Activated CD8-positive, alpha-beta T cell treated with anti-CD3 and anti-CD28 coated beads for 36 hours (primary cell): ENCODE measurements at regions of chr2 and their contacts with region 1.

Region 1: GRCh38 chr2:26184555-26185303 is 11.8 kb downstream of the GAREM2 start:
- DNase-seq: peak; percentile 85
- ATAC-seq: peak; percentile 97
- H3K4me3 Mint-ChIP-seq: peak overlapping the region; percentile 74
- H3K27ac Mint-ChIP-seq: peak overlapping the region; percentile 52
- H3K4me1 Mint-ChIP-seq: peaks cover 9% of the 10 kb centered on the region
- H3K27me3 Mint-ChIP-seq: peaks cover 11% of the 10 kb centered on the region
- CTCF ChIP-seq: peak; percentile 59

Region 2: DNA sequence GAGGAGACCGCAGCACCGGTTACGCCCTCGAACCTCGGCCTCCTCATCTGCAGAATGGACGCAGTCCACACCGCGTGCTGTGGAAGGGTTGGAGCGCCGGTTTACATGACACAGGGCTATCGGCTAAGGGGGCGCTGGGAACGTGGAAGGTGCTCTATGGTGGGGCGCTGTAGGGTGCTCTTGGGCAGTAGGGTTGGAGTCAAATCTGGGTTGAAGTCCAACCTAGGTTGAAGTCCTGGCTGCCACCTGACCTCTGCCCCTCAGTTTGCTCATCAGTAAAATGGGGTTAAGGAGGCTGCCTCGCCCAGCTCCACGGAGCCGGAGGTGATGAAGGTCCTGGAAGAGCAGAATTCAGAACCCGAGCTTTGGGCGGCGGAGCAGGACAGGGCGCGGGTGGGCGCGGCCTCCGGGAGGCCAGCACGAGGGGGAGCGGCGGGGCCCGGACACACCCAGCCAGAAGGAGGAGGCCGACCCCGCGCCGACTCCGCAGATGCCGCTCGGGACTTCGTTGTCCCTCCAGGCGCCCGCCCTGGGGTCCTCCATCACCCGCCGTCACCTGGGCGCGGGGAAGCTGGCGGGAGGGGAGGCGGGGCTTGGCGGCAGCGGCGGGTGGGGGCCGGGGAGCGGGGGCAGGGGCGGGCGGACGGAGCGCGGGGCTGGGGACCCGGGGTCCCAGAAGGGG is 12.4 kb before region 1 on chr2:
- CTCF ChIA-PET with region 1: interaction called, 30 read pairs
- POLR2A ChIA-PET with region 1: interaction called, 5 read pairs
- intact Hi-C with region 1: no loop called
- DNase-seq: no peak
- ATAC-seq: no peak
- H3K4me3 Mint-ChIP-seq: peak overlapping the region; percentile 71
- H3K27ac Mint-ChIP-seq: no peak overlapping the region
- H3K4me1 Mint-ChIP-seq: peaks cover 11% of the 10 kb centered on the region
- H3K27me3 Mint-ChIP-seq: peaks cover 26% of the 10 kb centered on the region
- CTCF ChIP-seq: no peak

Region 3: DNA sequence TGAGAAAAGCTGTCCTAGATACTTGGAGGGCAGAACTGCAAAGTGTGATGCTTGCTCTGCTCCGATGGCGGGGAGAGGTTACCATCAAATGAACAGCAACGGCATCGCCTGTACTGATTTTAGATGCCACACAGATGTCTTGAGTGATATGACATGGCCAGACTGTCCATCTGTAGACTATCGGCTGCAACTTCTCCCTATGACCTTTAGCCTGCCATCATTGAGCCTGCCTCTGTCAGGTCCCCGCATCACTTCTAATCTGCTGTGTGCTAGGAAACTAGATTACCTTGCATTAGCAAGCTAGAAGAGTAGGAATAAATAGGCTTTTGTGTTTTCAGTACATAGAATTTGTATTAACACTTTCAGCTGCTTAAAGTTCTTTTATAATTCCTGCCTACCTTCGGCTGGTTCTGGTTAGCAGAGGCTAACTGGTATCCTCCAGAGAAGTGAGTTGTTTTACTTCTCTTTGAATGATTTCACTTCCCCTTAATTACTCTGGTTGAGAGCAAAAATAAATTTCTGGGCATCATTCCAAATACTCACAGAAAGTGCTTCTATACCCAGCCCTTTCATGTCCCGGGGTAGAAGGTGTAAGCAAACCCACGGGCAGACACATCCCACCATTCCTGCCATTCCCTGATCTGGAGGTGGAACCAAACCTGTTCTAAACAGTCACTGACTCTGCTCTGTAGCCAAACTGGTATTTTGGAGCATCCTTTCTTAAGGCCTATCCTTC is 12.1 kb after region 1 on chr2:
- CTCF ChIA-PET with region 1: interaction called, 12 read pairs
- POLR2A ChIA-PET with region 1: interaction called, 5 read pairs
- intact Hi-C with region 1: no loop called
- DNase-seq: no peak
- ATAC-seq: no peak
- H3K4me3 Mint-ChIP-seq: no peak overlapping the region
- H3K27ac Mint-ChIP-seq: no peak overlapping the region
- H3K4me1 Mint-ChIP-seq: no peaks in the 10 kb centered on the region
- H3K27me3 Mint-ChIP-seq: no peaks in the 10 kb centered on the region
- CTCF ChIP-seq: no peak